ENCODE measurements at regions of chr7 and their contacts with region 1.

Region 1: DNA sequence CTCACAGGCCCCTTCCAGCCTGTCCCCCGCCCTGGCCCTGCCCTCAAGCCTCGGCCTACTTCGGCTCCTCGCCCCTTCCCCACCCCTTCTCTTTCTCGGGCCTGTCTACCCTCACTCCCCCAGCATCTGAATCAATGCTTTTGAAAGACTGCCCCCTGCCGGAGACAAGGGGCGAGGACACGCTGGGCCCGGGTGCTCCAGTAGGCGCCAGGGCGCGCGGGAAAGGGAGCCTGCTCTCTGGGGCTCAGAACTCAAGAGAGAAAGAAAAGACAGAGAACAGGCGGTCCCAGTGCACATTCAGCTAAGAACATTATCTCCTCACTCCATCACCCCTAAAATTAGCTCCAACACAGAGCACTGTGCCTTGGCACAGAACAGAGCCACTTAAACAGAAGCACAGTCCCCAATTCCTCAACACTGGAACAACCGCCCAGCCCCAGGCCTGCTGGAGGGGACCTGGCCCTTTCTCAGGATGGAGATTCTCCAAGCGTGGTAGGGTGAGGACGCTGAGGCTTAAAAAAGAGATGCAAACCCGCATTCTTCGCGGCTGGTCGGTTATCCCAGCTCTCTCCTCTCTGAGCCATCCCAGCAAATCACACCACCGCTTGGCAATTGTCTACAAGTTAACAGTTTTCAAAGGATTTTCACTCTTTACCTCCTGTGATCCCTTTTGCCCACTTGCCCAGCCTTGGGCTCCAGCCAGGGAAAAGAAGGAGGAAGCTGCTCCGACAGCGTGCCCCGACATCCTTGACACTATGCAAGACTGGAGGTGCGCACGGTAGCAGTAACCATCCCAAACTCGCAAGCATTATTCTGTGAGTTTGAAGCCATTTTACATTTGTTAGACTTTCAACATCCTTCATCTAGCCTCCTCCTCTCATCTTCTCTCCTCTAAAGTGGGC is 2.1 kb downstream of the GIGYF1 start:
- DNase-seq: peak; percentile 75 to 87
- H3K4me3 ChIP-seq: peak overlapping the region; percentile 82 to 97
- H3K27ac ChIP-seq: peak overlapping the region; percentile 37 to 79
- H3K4me1 ChIP-seq: peaks cover 0 to 60% (median 46%) of the 10 kb centered on the region in 4 donors
- H3K27me3 ChIP-seq: no peaks in the 10 kb centered on the region
- CTCF ChIP-seq: peak; percentile 86 to 87

Region 2: DNA sequence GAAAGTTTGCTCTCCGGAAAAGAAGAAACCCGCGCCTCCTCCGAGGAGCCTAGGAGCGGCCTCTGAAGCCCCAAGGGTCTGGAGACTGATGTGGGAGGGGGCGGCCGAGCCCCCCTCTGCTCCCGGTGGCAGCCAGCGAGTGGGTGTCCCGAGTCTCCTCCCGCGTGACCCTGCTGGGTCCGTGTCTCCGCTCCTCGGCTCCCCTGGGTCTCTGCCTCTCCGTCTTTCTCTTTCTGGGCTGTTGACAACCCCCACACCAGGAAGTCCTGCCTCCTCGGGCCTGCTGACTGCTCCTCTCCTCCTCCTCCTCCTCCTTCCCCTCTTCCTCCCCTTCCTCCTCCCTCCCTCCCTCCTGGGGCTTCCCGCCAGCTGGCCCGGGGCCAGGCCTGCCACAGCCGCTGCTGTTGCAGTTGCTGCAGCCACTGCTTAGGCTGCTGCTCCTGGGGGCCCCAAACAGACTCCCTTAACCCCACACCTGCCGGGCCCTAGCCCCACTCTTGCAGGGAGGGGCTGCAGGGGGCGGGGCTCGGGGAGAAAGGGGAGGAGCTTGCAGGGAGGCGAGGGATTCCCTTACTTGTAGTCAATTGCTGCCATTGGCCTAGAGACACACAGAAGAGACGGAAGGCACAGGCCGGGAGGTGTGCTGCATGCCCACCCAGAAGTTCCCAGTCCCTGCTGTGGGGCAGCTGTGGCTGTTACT is 212.8 kb before region 1 on chr7 and contains the start of gene TSC22D4:
- intact Hi-C with region 1: loop called (anchors 5 kb)
- DNase-seq: peak; percentile 96 to 98
- H3K4me3 ChIP-seq: peak within 1 kb of the TSS; percentile 65 to 98
- H3K27ac ChIP-seq: peak within 1 kb of the TSS; percentile 84 to 95
- H3K4me1 ChIP-seq: peaks cover 0 to 62% (median 46%) of the 10 kb centered on the region in 4 donors
- H3K27me3 ChIP-seq: no peaks in the 10 kb centered on the region
- CTCF ChIP-seq: peak in 1 of 2 experiments; percentile 4

Region 3: DNA sequence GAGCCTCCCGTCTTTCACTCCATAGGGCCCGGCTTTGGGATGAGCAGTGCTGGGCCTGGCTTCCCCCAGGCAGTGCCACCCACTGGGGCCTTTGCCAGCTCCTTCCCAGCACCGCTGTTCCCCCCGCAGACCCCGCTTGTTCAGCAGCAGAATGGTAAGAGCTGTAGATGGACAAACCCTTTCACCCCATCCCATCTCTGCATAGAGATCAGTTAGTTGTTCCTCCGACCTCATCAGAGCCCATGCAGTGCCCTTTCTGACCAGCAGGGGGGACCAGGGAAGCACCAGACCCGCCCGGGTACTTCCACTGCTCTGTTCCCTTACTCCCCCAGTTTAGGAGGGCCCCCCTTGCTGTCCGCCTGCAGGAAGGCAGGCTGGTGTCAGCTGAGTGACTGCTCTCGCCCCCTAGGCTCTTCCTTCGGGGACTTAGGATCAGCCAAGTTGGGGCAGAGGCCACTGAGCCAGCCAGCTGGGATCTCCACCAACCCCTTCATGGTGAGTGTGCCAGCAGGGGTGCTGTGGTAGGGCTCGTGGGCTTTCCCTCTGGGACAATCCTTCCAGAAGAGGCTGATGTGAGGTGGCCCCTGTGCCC is 128.0 kb before region 1 on chr7:
- intact Hi-C with region 1: loop called (anchors 5 kb)
- DNase-seq: peak; percentile 86
- H3K4me3 ChIP-seq: no peak overlapping the region
- H3K27ac ChIP-seq: no peak overlapping the region
- H3K4me1 ChIP-seq: peaks cover 0 to 12% (median 0%) of the 10 kb centered on the region in 4 donors
- H3K27me3 ChIP-seq: no peaks in the 10 kb centered on the region
- CTCF ChIP-seq: peak; percentile 92 to 97

Measured in tibial artery (tissue), 4 donors.